ENCODE measurements at regions of chr15 and their contacts with region 1.

Region 1: DNA sequence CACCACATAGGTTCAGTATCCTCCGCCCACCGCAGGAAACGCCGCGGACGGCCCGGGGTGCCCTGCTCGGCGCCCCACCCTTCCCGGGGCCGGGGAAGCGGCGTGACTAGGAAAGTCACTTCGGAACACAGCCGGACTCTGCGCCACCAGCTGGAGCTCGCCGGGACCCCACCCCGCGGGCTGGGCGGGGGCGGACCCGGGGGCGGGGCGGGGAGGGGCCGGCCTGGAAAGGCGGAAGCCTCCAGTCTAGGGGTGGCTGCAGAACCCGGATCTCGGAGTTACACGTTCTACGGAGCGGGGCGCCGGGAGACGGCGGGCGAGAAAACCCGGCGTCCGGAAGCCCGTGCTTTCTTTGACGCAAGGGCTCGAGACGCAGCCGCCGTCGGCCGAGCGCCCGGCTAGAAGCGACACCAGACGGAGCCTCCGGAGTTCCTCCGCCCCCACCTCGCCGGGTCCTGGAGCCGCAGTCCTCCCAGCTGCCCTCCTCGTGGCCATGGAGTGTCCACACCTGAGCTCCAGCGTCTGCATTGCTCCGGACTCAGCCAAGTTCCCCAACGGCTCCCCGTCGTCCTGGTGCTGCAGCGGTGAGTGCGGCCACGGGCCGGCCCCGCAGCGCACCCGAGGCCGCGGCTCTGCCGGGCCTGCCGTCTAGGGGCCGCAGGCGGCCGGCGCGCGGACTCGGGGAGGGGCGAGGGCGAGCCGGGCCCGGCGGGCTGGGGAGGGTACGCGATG is at the start of gene USP3:
- DNase-seq: peak; percentile 94
- ATAC-seq: peak; percentile 66
- H3K4me3 Mint-ChIP-seq: peak within 1 kb of the TSS; percentile 89
- H3K27ac Mint-ChIP-seq: peak within 1 kb of the TSS; percentile 98
- H3K4me1 Mint-ChIP-seq: peaks cover 81% of the 10 kb centered on the region
- H3K27me3 Mint-ChIP-seq: no peaks in the 10 kb centered on the region
- total RNA-seq, gene USP3: 48.3 to 49.1 TPM

Region 2: GRCh38 chr15:63481105-63481810 is 23.2 kb before region 1 on chr15:
- CTCF ChIA-PET with region 1: interaction called, 124 read pairs
- POLR2A ChIA-PET with region 1: interaction called, 36 read pairs
- DNase-seq: no peak
- ATAC-seq: no peak
- H3K4me3 Mint-ChIP-seq: no peak overlapping the region
- H3K27ac Mint-ChIP-seq: no peak overlapping the region
- H3K4me1 Mint-ChIP-seq: peaks cover 54% of the 10 kb centered on the region
- H3K27me3 Mint-ChIP-seq: no peaks in the 10 kb centered on the region

Region 3: GRCh38 chr15:63492541-63493077 is 11.8 kb before region 1 on chr15:
- CTCF ChIA-PET with region 1: interaction called, 172 read pairs
- POLR2A ChIA-PET with region 1: interaction called, 36 read pairs
- DNase-seq: no peak
- ATAC-seq: no peak
- H3K4me3 Mint-ChIP-seq: no peak overlapping the region
- H3K27ac Mint-ChIP-seq: no peak overlapping the region
- H3K4me1 Mint-ChIP-seq: peaks cover 38% of the 10 kb centered on the region
- H3K27me3 Mint-ChIP-seq: no peaks in the 10 kb centered on the region

Region 4: DNA sequence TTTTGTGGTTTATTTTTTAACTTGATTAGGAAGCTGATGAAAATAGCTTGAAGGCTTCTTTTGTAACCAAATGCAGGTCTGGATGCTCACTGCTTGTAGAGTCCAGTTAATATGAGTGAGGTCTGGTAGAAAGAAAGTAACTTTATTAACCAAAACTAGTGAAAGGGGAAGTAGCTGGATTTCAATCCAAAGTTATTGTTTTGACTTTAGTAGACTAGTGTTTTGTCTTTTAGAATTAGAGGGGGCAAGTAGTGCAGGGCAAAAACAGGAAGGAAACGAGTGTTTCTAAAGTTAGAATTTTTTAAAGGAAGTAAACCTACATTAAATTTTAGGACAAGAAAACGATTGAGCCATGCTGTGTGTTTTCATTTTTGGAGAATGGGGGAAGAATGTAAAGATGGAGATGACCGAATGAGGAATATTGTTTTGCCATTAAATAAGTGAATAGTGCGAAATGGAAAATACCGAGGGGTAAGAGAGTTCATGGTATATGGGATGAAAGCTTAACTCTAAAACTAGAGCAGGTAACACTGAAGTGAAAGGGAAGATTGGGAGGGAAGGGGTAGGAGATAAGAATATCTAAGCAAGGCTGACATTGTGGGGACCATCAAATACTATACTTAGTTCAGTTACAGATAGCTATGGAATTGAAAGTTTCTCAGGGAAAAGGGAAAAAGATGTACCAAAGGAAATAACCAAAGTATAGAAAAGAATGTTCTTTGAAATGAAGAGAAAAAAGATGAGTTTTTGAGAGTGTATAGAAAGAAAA is 40.0 kb after region 1 on chr15:
- CTCF ChIA-PET with region 1: interaction called, 13 read pairs
- POLR2A ChIA-PET with region 1: interaction called, 3 read pairs
- DNase-seq: no peak
- ATAC-seq: no peak
- H3K4me3 Mint-ChIP-seq: peak overlapping the region; percentile 15
- H3K27ac Mint-ChIP-seq: peak overlapping the region; percentile 60
- H3K4me1 Mint-ChIP-seq: peaks cover 20% of the 10 kb centered on the region
- H3K27me3 Mint-ChIP-seq: no peaks in the 10 kb centered on the region

Measured in activated CD8-positive, alpha-beta T cell treated with anti-CD3 and anti-CD28 coated beads, Interleukin-2, amount 10 ng/mL, durations not matched to agents 7 days and 5 days (primary cell).